H1 (cell line): ENCODE measurements at regions of chr17 and their contacts with region 1.

Region 1: DNA sequence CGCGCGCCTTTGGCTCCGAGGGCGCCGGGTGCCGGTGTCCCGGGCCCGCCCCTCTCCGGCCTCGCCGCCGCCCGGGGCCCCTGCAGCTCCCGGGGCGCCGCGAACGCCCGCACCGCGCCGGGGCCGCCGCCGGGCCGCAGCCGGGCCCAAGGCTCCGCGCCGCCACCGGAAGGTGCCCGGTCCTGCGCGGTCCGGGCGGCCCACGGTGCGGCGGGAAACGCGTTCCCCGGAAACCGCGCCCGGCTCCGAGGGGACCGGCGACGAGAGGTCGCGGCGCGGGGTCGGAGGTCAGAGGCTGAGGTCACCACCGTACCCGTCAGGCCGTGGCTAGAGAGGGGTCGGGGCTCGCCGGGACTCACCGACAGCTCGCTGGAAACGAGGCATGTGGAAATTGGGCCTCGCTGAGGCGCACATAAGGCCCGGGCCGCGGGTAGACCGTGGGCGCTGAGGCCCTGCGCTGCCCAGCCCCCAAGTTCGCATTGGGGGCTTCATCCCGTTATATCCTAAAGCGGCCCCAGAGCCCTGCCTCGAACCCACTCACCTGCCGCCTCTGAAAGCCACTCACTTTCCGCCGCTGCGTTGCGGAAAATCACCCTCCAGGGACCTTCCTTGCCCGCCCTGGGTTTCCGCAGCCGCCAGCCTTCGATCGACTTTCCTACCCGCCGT is at the start of gene DUS1L:
- DNase-seq: peak in 1 of 2 experiments; percentile 85
- H3K4me3 ChIP-seq: peak within 1 kb of the TSS; percentile 53 to 93 (median 77)
- H3K27ac ChIP-seq: no peak within 1 kb of the TSS
- H3K4me1 ChIP-seq: peaks cover 0 to 10% (median 5%) of the 10 kb centered on the region in 4 experiments; a peak in 5 of 7 replicates
- H3K27me3 ChIP-seq: no peaks in the 10 kb centered on the region
- CTCF ChIP-seq: no peak
- EP300 ChIP-seq: peak; percentile 17 to 60; a peak in 2 of 3 replicates
- POLR2A ChIP-seq: no peak
- RAD21 ChIP-seq: no peak
- total RNA-seq, gene DUS1L: 68.0 and 69.1 TPM in 2 replicates

Region 2: GRCh38 chr17:81983639-81984373 is 82.0 kb before region 1 on chr17:
- CTCF ChIA-PET with region 1: no interaction called
- POLR2A ChIA-PET with region 1: no interaction called
- DNase-seq: no peak
- H3K4me3 ChIP-seq: no peak overlapping the region
- H3K27ac ChIP-seq: no peak overlapping the region
- H3K4me1 ChIP-seq: no peaks in the 10 kb centered on the region
- H3K27me3 ChIP-seq: no peaks in the 10 kb centered on the region
- CTCF ChIP-seq: no peak
- EP300 ChIP-seq: no peak
- POLR2A ChIP-seq: no peak
- RAD21 ChIP-seq: no peak

Region 3: DNA sequence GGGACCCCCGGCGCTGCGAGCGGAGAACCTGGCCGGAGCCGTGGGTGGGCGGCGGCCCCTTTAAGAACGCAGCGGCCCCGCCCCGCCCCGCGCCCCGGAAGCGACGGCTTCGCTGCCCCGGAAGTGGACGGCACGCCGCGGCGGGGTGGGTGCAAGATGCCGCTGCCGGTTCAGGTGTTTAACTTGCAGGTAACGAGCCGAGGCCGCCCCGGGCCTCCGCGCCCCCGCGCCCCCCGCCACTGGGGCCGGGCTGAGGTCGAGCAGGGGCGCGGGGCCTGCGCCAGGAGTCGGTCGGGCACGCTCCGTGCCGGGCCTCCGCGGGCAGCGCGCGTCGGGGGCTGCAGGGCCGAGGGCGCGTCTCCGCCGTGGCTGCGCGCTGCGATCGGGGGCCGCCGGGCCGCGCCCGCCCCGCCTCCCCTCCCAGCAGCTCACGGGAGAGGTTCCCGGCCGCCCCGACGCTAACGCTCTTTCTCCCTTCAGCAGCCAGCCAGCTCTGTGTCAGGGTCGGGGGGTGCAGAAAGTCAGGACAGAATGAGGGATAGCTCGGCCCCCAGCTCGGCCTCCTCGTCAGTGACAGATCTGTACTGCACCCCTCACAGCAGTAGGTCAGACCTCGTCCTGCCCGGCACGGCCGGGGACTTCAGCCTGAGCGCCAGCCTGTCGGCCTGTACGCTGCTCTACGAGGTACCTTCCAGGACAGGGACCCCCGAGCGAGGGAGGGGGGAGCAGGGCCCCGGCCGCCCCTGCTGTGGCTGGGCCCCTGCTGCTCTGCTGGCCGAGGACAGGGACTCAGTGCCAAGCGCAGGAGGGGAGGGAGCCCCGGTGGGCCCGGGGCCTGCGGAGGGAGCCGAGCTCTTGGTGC is 13.8 kb before region 1 on chr17 and contains the starts of genes GPS1 and RFNG:
- CTCF ChIA-PET with region 1: interaction called, 8 read pairs
- POLR2A ChIA-PET with region 1: interaction called, 161 read pairs
- DNase-seq: peak in 1 of 2 experiments; percentile 86
- H3K4me3 ChIP-seq: peak within 1 kb of the TSS; percentile 72 to 94 (median 86)
- H3K27ac ChIP-seq: no peak within 1 kb of the TSS
- H3K4me1 ChIP-seq: peaks cover 0 to 11% (median 6%) of the 10 kb centered on the region in 4 experiments; a peak in 5 of 7 replicates
- H3K27me3 ChIP-seq: no peaks in the 10 kb centered on the region; a peak in 1 of 7 replicates
- CTCF ChIP-seq: no peak
- EP300 ChIP-seq: no peak
- POLR2A ChIP-seq: no peak; a peak in 1 of 3 replicates
- RAD21 ChIP-seq: no peak
- total RNA-seq, gene GPS1: 153 and 157 TPM in 2 replicates
- total RNA-seq, gene RFNG: 26.7 and 30.9 TPM in 2 replicates

Region 4: DNA sequence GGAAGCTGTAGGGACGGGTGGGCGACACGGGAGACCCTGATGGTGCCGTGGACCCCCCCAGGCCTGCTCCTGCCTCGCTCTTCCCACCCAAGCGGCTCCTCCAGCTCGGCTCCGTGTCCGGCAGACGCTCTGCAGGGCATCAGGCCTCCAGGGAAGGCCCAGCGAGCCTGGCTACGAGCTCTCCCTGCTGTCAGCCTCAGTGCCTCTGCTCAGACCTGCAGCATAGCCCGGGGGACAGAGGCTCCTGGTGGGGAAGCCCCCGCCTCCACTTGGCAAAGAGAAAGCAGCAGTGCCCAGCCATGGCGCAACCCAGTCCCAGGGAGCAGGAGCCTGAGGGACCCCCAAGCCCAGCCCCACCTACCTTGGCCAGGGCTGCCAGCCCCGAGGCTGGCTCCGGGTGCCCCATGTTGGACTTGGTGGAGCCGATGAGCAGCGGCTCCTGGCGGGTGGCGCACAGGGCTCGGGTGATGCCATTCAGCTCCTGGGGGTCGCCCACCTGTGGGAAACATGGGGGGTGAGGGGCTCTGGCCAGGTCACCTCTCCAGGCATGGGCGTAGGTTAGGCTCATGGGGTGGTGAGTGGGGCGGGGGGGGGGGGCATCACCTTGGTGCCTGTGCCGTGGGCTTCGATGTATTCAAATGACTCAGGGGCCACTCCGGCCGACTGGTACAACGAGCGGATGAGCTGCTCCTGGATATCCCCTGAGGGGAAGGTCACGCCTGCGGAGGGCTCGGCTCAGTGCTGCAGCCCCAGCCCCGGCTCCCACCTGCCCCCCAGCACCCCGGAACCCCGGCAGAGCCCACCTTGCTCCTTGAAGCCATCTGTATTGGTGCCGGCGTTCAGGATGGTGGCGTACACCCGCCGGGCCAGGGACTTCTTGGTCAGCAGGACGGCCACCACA is 26.6 kb after region 1 on chr17:
- CTCF ChIA-PET with region 1: interaction called, 3 read pairs
- POLR2A ChIA-PET with region 1: interaction called, 42 read pairs
- DNase-seq: no peak
- H3K4me3 ChIP-seq: no peak overlapping the region
- H3K27ac ChIP-seq: no peak overlapping the region
- H3K4me1 ChIP-seq: peaks cover 0 to 13% (median 10%) of the 10 kb centered on the region in 4 experiments; a peak in 6 of 7 replicates
- H3K27me3 ChIP-seq: no peaks in the 10 kb centered on the region
- CTCF ChIP-seq: no peak
- EP300 ChIP-seq: no peak
- POLR2A ChIP-seq: no peak; a peak in 1 of 3 replicates
- RAD21 ChIP-seq: no peak